Naive thymus-derived CD4-positive, alpha-beta T cell (primary cell): ENCODE measurements at regions of chr10 and their contacts with region 1.

Region 1: GRCh38 chr10:102225646-102226541 is at the start of gene ELOVL3:
- DNase-seq: peak; percentile 56 to 83 (median 79)
- ATAC-seq: peak; percentile 95
- H3K4me3 ChIP-seq: peak within 1 kb of the TSS; percentile 26
- H3K4me3 Mint-ChIP-seq: peak within 1 kb of the TSS; percentile 72 to 95 (median 80)
- H3K27ac ChIP-seq: no peak within 1 kb of the TSS
- H3K27ac Mint-ChIP-seq: peak within 1 kb of the TSS in 5 of 9 donors; percentile 14 to 78 (median 74)
- H3K4me1 ChIP-seq: peaks cover 20 to 22% of the 10 kb centered on the region in 2 donors
- H3K4me1 Mint-ChIP-seq: peaks cover 14 to 23% (median 21%) of the 10 kb centered on the region in 7 donors
- H3K27me3 ChIP-seq: peaks cover 3 to 5% of the 10 kb centered on the region in 2 donors
- H3K27me3 Mint-ChIP-seq: peaks cover 36 to 74% (median 39%) of the 10 kb centered on the region in 5 donors
- total RNA-seq, gene ELOVL3: not detected

Region 2: GRCh38 chr10:102167861-102168260 is 58.0 kb before region 1 on chr10:
- CTCF ChIA-PET with region 1: interaction called, 5 read pairs
- POLR2A ChIA-PET with region 1: no interaction called
- intact Hi-C with region 1: loop called (anchors 1 kb)
- DNase-seq: no peak
- ATAC-seq: no peak
- H3K4me3 ChIP-seq: no peak overlapping the region
- H3K4me3 Mint-ChIP-seq: peak overlapping the region in 1 of 10 donors; percentile 45
- H3K27ac ChIP-seq: no peak overlapping the region
- H3K27ac Mint-ChIP-seq: no peak overlapping the region
- H3K4me1 ChIP-seq: peaks cover 0 to 8% of the 10 kb centered on the region in 2 donors
- H3K4me1 Mint-ChIP-seq: peaks cover 0 to 20% (median 8%) of the 10 kb centered on the region in 7 donors
- H3K27me3 ChIP-seq: no peaks in the 10 kb centered on the region
- H3K27me3 Mint-ChIP-seq: peaks cover 0 to 5% (median 0%) of the 10 kb centered on the region in 5 donors

Region 3: DNA sequence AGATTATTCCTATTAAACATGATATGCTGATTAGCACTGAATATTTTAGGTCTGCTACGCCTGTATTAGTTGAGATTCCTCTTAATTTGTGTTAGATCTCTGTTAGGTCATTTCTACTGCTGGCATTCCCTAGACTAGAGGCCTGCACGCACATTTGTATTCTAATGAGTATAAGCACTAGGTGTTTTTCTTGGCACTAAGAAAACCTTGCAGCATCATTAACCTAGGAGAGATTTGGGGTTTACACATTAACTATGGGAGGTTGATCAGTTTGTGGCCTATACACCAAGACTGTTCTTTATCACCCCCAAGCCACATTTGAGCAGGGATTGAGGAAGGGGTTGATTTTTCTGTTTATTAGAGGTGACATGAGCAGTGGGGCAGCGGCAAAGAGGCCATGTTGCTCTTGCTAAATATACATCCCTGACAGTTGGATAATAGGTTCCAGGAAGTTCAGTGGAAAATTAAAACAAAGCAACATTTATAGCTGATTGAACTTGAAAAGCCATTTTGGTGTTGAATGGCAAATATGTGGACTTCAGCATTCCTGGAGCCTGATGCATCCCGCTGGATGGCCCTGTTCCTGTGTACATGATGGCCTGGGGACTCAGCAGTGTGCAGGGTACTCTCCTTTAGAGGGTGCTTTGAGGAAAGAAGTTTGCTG is 84.6 kb after region 1 on chr10:
- CTCF ChIA-PET with region 1: no interaction called
- POLR2A ChIA-PET with region 1: no interaction called
- intact Hi-C with region 1: no loop called
- DNase-seq: no peak
- ATAC-seq: no peak
- H3K4me3 ChIP-seq: no peak overlapping the region
- H3K4me3 Mint-ChIP-seq: no peak overlapping the region
- H3K27ac ChIP-seq: no peak overlapping the region
- H3K27ac Mint-ChIP-seq: peak overlapping the region in 2 of 9 donors; percentile 2 to 4
- H3K4me1 ChIP-seq: no peaks in the 10 kb centered on the region
- H3K4me1 Mint-ChIP-seq: peaks cover 27 to 50% (median 47%) of the 10 kb centered on the region in 7 donors
- H3K27me3 ChIP-seq: no peaks in the 10 kb centered on the region
- H3K27me3 Mint-ChIP-seq: no peaks in the 10 kb centered on the region

Region 4: GRCh38 chr10:102352066-102352715 is 126.3 kb after region 1 on chr10:
- CTCF ChIA-PET with region 1: interaction called, 136 read pairs
- POLR2A ChIA-PET with region 1: interaction called, 4 read pairs
- intact Hi-C with region 1: loop called (anchors 1 kb)
- DNase-seq: peak; percentile 41 to 75 (median 64)
- ATAC-seq: peak; percentile 85
- H3K4me3 ChIP-seq: no peak overlapping the region
- H3K4me3 Mint-ChIP-seq: no peak overlapping the region
- H3K27ac ChIP-seq: no peak overlapping the region
- H3K27ac Mint-ChIP-seq: no peak overlapping the region
- H3K4me1 ChIP-seq: no peaks in the 10 kb centered on the region
- H3K4me1 Mint-ChIP-seq: peaks cover 0 to 3% (median 0%) of the 10 kb centered on the region in 7 donors
- H3K27me3 ChIP-seq: no peaks in the 10 kb centered on the region
- H3K27me3 Mint-ChIP-seq: no peaks in the 10 kb centered on the region

Region 5: GRCh38 chr10:102583435-102584417 is 357.8 kb after region 1 on chr10:
- CTCF ChIA-PET with region 1: interaction called, 39 read pairs
- POLR2A ChIA-PET with region 1: interaction called, 4 read pairs
- intact Hi-C with region 1: loop called (anchors 1 to 2 kb)
- DNase-seq: peak; percentile 57 to 79 (median 76)
- ATAC-seq: peak; percentile 97
- H3K4me3 ChIP-seq: no peak overlapping the region
- H3K4me3 Mint-ChIP-seq: no peak overlapping the region
- H3K27ac ChIP-seq: no peak overlapping the region
- H3K27ac Mint-ChIP-seq: peak overlapping the region in 5 of 9 donors; percentile 14 to 76 (median 47)
- H3K4me1 ChIP-seq: no peaks in the 10 kb centered on the region
- H3K4me1 Mint-ChIP-seq: peaks cover 6 to 21% (median 16%) of the 10 kb centered on the region in 7 donors
- H3K27me3 ChIP-seq: no peaks in the 10 kb centered on the region
- H3K27me3 Mint-ChIP-seq: no peaks in the 10 kb centered on the region

Region 6: GRCh38 chr10:102641880-102642735 is 416.2 kb after region 1 on chr10:
- CTCF ChIA-PET with region 1: no interaction called
- POLR2A ChIA-PET with region 1: no interaction called
- intact Hi-C with region 1: no loop called
- DNase-seq: peak; percentile 85 to 99 (median 93)
- ATAC-seq: peak; percentile 84
- H3K4me3 ChIP-seq: peak overlapping the region; percentile 85
- H3K4me3 Mint-ChIP-seq: peak overlapping the region; percentile 90 to 97 (median 93)
- H3K27ac ChIP-seq: peak overlapping the region; percentile 98
- H3K27ac Mint-ChIP-seq: peak overlapping the region; percentile 84 to 98 (median 95)
- H3K4me1 ChIP-seq: peaks cover 8 to 13% of the 10 kb centered on the region in 2 donors
- H3K4me1 Mint-ChIP-seq: peaks cover 13 to 29% (median 19%) of the 10 kb centered on the region in 7 donors
- H3K27me3 ChIP-seq: no peaks in the 10 kb centered on the region
- H3K27me3 Mint-ChIP-seq: peaks cover 0 to 6% (median 0%) of the 10 kb centered on the region in 5 donors